ENCODE measurements at regions of chr6 and their contacts with region 1.

Region 1: DNA sequence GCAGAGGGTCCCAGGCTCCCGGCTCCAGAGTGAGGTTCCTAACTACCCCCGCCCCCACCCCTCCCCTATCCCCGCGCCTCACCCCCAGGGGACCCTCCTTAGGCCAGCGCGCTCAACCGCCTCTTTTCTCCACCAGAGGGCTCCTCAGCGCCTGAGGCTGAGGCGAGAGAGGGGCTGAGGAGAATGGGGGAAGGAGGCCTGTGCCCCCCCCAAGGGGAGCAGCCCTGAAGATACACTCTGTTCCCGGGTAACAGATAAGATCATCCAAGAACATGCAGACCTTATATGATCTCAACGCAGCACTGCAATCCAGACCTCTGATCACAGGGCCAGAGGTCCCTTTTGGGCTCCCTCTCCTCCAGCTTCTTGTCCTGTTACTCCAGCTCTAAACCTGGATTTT is 43.3 kb upstream of the MRPS10 start:
- DNase-seq: no peak

Region 2: DNA sequence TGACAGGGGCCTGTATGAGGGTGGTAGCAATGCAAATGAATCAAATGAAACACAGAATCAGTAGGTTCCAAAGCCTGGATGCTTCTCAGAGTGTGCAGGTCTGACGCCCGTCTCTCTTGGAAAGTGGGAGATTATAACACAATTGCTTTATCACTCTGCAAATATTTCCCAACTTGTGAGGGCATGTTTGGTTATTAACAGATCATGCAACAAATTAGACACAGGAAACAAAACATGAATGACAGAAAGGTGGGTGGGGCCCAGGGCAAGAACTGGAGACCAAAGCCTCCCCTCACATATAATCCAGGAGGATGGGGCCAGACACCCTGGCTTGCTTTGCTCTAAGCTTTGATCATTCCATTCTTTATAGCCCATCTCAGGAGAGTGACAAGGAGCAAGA is 65.3 kb after region 1 on chr6:
- intact Hi-C with region 1: no loop called
- DNase-seq: no peak

Region 3: DNA sequence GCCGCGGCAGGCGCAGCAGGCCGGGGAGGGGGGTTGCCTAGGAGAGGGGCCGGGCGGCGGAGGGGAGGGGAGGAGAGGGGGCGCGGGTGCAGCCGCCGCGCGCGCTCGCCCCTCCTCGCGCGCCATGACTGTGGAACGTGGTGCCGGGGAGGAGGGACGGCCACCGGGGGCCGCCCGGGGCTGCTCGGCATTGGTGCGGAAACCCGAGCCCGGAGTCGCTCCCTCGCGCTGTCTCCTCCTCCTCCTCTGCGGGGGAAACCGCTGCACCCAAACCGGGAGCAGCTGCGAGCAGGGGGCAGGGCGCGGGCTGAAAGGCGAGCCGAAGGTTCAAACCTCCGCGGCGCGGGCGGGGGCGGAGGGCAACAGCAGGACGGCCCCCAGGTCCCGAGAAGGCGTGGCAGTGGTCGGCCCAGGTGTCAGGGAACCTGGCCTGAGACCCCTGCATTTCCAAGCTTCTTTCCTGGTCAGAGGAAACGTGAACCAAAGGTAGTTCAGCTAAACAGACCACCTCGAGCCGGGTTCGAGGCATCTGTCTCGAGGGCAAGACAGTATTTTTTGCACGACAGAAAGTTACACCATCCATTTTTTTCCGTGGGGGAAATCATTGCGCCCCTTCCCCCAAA is 192.2 kb after region 1 on chr6:
- intact Hi-C with region 1: loop called (anchors 5 kb)
- DNase-seq: peak; percentile 89

Measured in cardiac septum (tissue), 1 donor.